PC-3 (cell line): ENCODE measurements at regions of chr9 and their contacts with region 1.

Region 1: DNA sequence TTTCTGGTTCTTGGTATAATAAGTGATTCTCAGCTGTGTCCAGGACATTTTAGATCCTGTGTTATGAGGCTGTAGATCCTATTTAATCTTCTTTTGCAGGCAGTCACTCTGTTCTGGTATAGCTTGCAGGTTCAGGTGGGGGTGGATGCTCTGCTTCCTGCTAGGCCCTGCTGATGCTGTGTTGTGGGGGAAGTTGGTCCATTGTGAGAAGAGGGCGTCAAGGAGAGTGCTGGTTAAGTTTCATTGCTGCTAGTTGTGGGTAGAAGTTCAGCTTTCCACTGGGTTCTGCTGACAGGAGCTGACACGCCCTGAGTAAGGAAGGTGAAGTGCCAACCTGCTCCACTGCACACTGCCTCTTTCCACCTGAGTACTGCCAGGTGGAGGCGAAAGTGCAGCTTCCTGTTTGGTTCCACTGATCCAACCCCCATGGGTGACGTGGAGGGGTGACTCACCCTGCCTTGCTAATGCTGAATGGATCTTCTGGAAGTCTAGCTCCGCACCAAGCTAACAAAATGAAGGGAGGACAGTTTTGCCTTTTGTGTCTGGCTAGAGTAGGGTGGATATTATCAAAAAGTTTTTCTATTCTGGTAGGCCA is 16.3 kb downstream of the NMRK1 start:
- DNase-seq: peak; percentile 82
- ATAC-seq: peak; percentile 70
- H3K4me3 ChIP-seq: peak overlapping the region; percentile 25; the same call in 1 of the 2 replicates
- H3K27ac ChIP-seq: peak overlapping the region; percentile 56
- H3K4me1 ChIP-seq: peaks cover 13% of the 10 kb centered on the region
- H3K27me3 ChIP-seq: no peaks in the 10 kb centered on the region
- CTCF ChIP-seq: no peak

Region 2: GRCh38 chr9:74940600-74940999 is 131.0 kb before region 1 on chr9:
- CTCF ChIA-PET with region 1: no interaction called
- POLR2A ChIA-PET with region 1: no interaction called
- intact Hi-C with region 1: loop called (anchors 5 kb)
- DNase-seq: peak; percentile 75
- ATAC-seq: peak; percentile 97
- H3K4me3 ChIP-seq: no peak overlapping the region
- H3K27ac ChIP-seq: no peak overlapping the region
- H3K4me1 ChIP-seq: no peaks in the 10 kb centered on the region
- H3K27me3 ChIP-seq: no peaks in the 10 kb centered on the region
- CTCF ChIP-seq: peak; percentile 67

Region 3: GRCh38 chr9:75108555-75108954 is 36.9 kb after region 1 on chr9:
- CTCF ChIA-PET with region 1: no interaction called
- POLR2A ChIA-PET with region 1: no interaction called
- intact Hi-C with region 1: no loop called
- DNase-seq: peak; percentile 44
- ATAC-seq: no peak
- H3K4me3 ChIP-seq: no peak overlapping the region
- H3K27ac ChIP-seq: no peak overlapping the region
- H3K4me1 ChIP-seq: peaks cover 10% of the 10 kb centered on the region
- H3K27me3 ChIP-seq: no peaks in the 10 kb centered on the region
- CTCF ChIP-seq: no peak